ENCODE measurements at regions of chr6 and their contacts with region 1.

Region 1: DNA sequence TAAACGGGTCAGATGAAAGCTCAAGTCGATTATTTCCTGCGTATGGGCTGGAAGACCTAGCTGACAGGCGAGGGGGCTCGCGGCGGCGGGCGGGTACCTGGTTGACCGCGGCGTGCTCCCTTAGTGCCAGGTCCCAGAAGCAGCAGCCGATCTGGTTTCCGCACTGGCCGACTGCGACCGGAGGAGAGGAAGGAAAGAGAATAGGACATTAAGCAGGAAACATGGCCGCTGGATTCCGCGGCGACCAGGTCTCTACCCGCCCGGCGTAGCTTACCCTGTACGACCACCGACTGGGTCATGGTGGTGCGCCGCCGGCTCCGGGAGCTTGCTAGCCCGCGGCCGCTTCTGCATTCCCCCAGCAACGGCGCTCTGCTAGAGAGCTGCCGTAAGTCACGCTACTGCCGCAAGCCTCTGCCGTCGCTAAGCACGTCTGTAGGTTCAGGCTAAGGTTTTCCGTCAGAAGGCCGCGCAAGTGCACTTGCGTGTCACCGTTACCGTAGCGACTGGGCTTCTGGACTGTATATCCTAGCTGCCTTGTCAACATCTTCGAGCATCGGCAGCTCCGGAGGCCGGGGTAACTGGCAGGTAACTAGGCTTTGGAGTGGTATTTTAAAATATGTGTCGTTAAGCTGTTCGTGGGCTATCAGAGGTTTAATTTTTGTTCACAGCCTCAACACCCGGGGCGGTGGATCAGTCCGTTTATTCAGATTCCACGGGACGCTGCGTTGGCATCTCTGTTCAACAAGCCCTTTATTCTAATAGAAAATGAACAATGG is at the starts of genes FAM229B and TUBE1:
- DNase-seq: peak; percentile 91
- H3K4me3 ChIP-seq: peak within 1 kb of the TSS; percentile 73 to 97 (median 93)
- H3K27ac ChIP-seq: peak within 1 kb of the TSS; percentile 74
- H3K4me1 ChIP-seq: peaks cover 5% of the 10 kb centered on the region
- H3K27me3 ChIP-seq: no peaks in the 10 kb centered on the region
- CTCF ChIP-seq: no peak
- total RNA-seq, gene FAM229B: 3.4 to 5.2 TPM
- total RNA-seq, gene TUBE1: 39.8 to 45.7 TPM

Region 2: DNA sequence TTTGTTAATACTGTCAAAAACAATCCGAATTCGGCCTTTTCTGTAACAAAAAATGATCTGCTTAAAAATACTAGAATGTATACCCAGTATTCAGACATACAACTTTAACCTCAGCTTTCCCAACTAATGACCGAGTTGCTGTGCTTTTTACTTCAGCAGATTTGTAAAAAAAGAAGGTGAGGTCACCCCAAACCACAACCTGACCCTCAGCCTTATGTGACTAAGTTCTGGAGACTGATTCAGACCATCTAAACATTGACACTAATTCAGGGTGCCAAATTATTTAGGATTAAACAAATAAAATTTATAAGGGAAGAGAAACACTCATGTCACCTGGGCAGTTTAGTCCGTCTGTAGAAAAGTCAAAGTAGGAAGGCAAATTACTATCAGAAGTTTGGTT is 25.7 kb before region 1 on chr6:
- CTCF ChIA-PET with region 1: no interaction called
- dilution Hi-C with region 1: no loop called
- in situ Hi-C with region 1: no loop called
- intact Hi-C with region 1: no loop called
- DNase-seq: peak; percentile 12
- H3K4me3 ChIP-seq: no peak overlapping the region
- H3K27ac ChIP-seq: no peak overlapping the region
- H3K4me1 ChIP-seq: no peaks in the 10 kb centered on the region
- H3K27me3 ChIP-seq: no peaks in the 10 kb centered on the region
- CTCF ChIP-seq: no peak

Region 3: DNA sequence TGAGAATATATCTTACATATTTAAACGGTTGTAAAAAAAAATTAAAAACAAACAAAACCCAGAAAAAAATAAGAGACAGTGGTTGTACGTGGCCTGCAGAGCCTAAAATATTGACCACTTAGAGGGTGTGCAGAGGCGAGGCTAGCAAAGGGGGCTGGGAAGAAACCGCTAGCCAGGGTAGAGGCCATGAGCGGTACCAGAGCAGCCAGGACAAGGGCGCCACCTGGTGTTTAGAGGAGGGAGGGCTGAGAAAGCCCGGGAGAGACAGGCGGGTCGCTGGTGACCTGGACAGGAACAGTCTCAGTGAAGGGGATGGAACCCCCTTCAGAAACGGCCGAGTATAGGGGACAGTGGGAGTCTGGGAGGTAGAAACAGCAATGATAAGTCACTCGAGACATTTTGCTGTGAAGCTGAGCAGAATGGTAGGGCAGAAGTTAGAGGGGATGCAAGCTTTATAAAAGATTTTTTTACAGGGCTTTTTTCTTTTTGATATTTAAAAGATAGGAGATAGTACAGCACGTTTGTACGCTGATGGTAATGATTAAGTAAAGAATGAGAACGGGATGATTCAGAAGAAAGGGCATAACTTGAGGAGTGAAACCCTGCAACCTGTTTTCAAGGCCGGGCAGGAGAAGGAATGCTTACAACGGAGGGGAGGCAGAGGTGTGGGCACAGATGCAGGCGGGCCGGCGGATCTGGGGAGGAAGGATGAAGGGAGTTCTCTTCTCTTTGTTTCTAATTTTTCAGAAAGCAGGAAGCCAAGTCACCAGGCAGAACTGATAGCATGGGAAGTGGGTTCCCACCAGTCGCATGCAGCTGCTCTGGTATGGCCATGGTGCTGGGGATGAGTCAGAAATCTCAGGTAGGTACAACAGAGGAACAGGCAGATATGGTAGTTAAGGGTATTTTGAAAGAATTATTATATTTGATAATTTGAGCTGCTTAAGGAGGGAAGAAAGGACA is 76.3 kb after region 1 on chr6:
- CTCF ChIA-PET with region 1: interaction called, 5 read pairs
- dilution Hi-C with region 1: no loop called
- in situ Hi-C with region 1: loop called in 1 of 2 experiments (anchors 10 kb)
- intact Hi-C with region 1: loop called (anchors 1 kb)
- DNase-seq: peak; percentile 39
- H3K4me3 ChIP-seq: no peak overlapping the region
- H3K27ac ChIP-seq: no peak overlapping the region
- H3K4me1 ChIP-seq: no peaks in the 10 kb centered on the region
- H3K27me3 ChIP-seq: no peaks in the 10 kb centered on the region
- CTCF ChIP-seq: peak; percentile 82 to 94

Region 4: DNA sequence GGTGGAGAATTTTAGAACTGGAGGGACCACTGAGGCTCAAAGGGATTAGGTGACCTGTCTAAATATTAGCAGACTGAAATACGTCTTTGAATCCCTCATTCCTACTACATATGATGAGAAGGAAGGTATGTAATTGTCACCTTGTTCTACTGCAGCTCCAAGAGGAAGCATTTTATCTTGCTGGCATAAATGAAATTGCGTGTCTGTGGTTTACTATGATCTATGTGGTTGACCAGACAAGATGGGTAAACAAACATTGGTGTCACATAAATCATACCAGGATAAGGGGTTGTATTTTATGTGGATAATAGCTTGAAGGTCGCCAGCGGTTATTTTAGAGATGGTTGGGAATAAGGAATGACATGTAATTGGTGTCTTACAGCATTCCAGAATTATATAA is 88.9 kb after region 1 on chr6:
- CTCF ChIA-PET with region 1: no interaction called
- dilution Hi-C with region 1: no loop called
- in situ Hi-C with region 1: no loop called
- intact Hi-C with region 1: no loop called
- DNase-seq: no peak
- H3K4me3 ChIP-seq: no peak overlapping the region
- H3K27ac ChIP-seq: no peak overlapping the region
- H3K4me1 ChIP-seq: no peaks in the 10 kb centered on the region
- H3K27me3 ChIP-seq: no peaks in the 10 kb centered on the region
- CTCF ChIP-seq: no peak

Region 5: GRCh38 chr6:112330071-112330878 is 243.0 kb after region 1 on chr6:
- CTCF ChIA-PET with region 1: no interaction called
- dilution Hi-C with region 1: no loop called
- in situ Hi-C with region 1: no loop called
- intact Hi-C with region 1: loop called (anchors 5 kb)
- DNase-seq: peak; percentile 62
- H3K4me3 ChIP-seq: no peak overlapping the region
- H3K27ac ChIP-seq: peak overlapping the region; percentile 38
- H3K4me1 ChIP-seq: peaks cover 30% of the 10 kb centered on the region
- H3K27me3 ChIP-seq: no peaks in the 10 kb centered on the region
- CTCF ChIP-seq: peak in 1 of 2 donors; percentile 23

Region 6: GRCh38 chr6:112626468-112627082 is 539.3 kb after region 1 on chr6:
- CTCF ChIA-PET with region 1: no interaction called
- dilution Hi-C with region 1: no loop called
- in situ Hi-C with region 1: no loop called
- intact Hi-C with region 1: no loop called
- DNase-seq: peak; percentile 39
- H3K4me3 ChIP-seq: no peak overlapping the region
- H3K27ac ChIP-seq: no peak overlapping the region
- H3K4me1 ChIP-seq: no peaks in the 10 kb centered on the region
- H3K27me3 ChIP-seq: no peaks in the 10 kb centered on the region
- CTCF ChIP-seq: no peak